GM12878 (cell line): ENCODE measurements at regions of chr2 and their contacts with region 1.

Region 1: GRCh38 chr2:230602562-230603230 is 109.9 kb upstream of the CAB39 start:
- DNase-seq: no peak
- ATAC-seq: peak; percentile 70
- H3K4me3 ChIP-seq: peak overlapping the region; percentile 32; the same call in 1 of the 2 replicates
- H3K27ac ChIP-seq: peak overlapping the region; percentile 86
- H3K4me1 ChIP-seq: peaks cover 47% of the 10 kb centered on the region
- H3K27me3 ChIP-seq: no peaks in the 10 kb centered on the region
- CTCF ChIP-seq: no peak
- EP300 ChIP-seq: no peak
- POLR2A ChIP-seq: peak; percentile 74
- RAD21 ChIP-seq: peak; percentile 16; the same call in 1 of the 2 replicates

Region 2: GRCh38 chr2:230124757-230125431 is 477.8 kb before region 1 on chr2:
- CTCF ChIA-PET with region 1: no interaction called
- POLR2A ChIA-PET with region 1: no interaction called
- RAD21 ChIA-PET with region 1: no interaction called
- SMC1A ChIA-PET with region 1: no interaction called
- in situ Hi-C with region 1: no loop called
- intact Hi-C with region 1: no loop called
- DNase-seq: no peak
- ATAC-seq: peak; percentile 82
- H3K4me3 ChIP-seq: peak overlapping the region; percentile 3; the same call in 1 of the 2 replicates
- H3K27ac ChIP-seq: no peak overlapping the region
- H3K4me1 ChIP-seq: 0 out of 2 replicates have a peak, but pooled peaks cover 4% of the 10 kb centered on the region
- H3K27me3 ChIP-seq: no peaks in the 10 kb centered on the region
- CTCF ChIP-seq: no peak
- EP300 ChIP-seq: no peak
- POLR2A ChIP-seq: no peak
- RAD21 ChIP-seq: no peak

Region 3: DNA sequence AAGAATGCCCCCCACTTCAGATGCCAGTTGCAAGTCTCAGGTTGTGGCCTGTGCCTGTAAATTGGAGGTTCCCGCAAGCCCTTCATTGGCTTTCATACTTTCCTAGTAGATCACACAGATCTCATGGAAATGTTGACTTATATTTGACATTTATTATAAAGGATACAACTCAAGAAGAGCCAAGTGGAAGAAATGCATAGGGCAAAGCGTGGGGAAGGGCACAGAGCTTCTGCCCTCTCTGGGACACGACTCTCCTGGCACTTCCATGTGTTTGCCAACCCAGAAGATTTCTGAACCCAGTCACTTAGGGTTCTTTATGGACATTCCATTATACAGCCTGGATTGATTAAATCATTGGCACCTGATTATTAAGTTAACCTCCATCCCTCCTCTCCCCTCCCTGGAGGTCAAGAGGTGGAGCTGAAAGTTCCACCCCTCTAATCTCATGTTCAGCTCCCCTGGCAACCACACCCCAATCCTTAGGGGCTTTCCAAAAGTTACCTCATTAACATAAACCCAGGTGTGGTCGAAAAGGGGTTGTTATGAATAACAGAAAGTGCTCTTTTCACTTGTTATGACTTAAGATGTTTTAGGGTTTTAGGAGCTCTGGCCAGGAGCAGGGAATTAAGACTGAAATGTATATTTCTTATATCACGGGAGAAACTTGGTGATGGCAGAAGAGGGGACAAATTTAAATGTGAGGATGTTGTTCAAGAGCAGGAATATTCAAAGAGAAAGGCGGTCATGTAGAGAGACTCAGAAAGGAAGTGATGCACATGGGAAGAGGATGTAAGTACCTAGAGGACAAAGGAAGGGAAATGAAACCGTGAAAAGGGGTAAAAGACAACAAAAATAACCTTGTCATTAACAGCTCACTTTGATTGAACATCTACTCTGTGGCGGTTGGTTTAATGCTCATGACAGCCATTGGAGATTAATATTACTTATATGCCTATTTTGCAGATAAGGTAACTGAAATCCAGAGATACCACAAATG is 154.9 kb before region 1 on chr2:
- CTCF ChIA-PET with region 1: interaction called, 4 read pairs
- POLR2A ChIA-PET with region 1: interaction called, 4 read pairs
- RAD21 ChIA-PET with region 1: interaction called, 26 read pairs
- SMC1A ChIA-PET with region 1: interaction called, 34 read pairs
- in situ Hi-C with region 1: no loop called
- intact Hi-C with region 1: loop called (anchors 5 kb)
- DNase-seq: peak; percentile 84
- ATAC-seq: peak; percentile 87
- H3K4me3 ChIP-seq: 0 out of 2 replicates have a peak overlapping the region, but pooled peaks have one; percentile 13
- H3K27ac ChIP-seq: peak overlapping the region; percentile 89
- H3K4me1 ChIP-seq: peaks cover 53% of the 10 kb centered on the region
- H3K27me3 ChIP-seq: no peaks in the 10 kb centered on the region
- CTCF ChIP-seq: no peak
- EP300 ChIP-seq: peak; percentile 80 to 84; a peak in 3 of 4 replicates
- POLR2A ChIP-seq: no peak
- RAD21 ChIP-seq: no peak

Region 4: GRCh38 chr2:230541934-230542380 is 60.7 kb before region 1 on chr2:
- CTCF ChIA-PET with region 1: no interaction called
- POLR2A ChIA-PET with region 1: no interaction called
- RAD21 ChIA-PET with region 1: interaction called, 7 read pairs
- SMC1A ChIA-PET with region 1: interaction called, 10 read pairs
- in situ Hi-C with region 1: no loop called
- intact Hi-C with region 1: loop called (anchors 2 kb)
- DNase-seq: peak; percentile 54
- ATAC-seq: peak; percentile 76
- H3K4me3 ChIP-seq: peak overlapping the region; percentile 21; the same call in 1 of the 2 replicates
- H3K27ac ChIP-seq: peak overlapping the region; percentile 41; the same call in 1 of the 2 replicates
- H3K4me1 ChIP-seq: peaks cover 53% of the 10 kb centered on the region
- H3K27me3 ChIP-seq: no peaks in the 10 kb centered on the region
- CTCF ChIP-seq: no peak
- EP300 ChIP-seq: peak; percentile 25 to 47; a peak in 2 of 4 replicates
- POLR2A ChIP-seq: no peak
- RAD21 ChIP-seq: 0 out of 2 replicates have a peak, but pooled peaks have one; percentile 4

Region 5: GRCh38 chr2:230589497-230590015 is 13.1 kb before region 1 on chr2:
- CTCF ChIA-PET with region 1: interaction called, 21 read pairs
- POLR2A ChIA-PET with region 1: interaction called, 41 read pairs
- RAD21 ChIA-PET with region 1: interaction called, 62 read pairs
- SMC1A ChIA-PET with region 1: interaction called, 82 read pairs
- in situ Hi-C with region 1: no loop called
- intact Hi-C with region 1: loop called (anchors 1 kb)
- DNase-seq: peak; percentile 98
- ATAC-seq: peak; percentile 90
- H3K4me3 ChIP-seq: no peak overlapping the region
- H3K27ac ChIP-seq: peak overlapping the region; percentile 96
- H3K4me1 ChIP-seq: peaks cover 62% of the 10 kb centered on the region
- H3K27me3 ChIP-seq: no peaks in the 10 kb centered on the region
- CTCF ChIP-seq: 0 out of 6 replicates have a peak, but pooled peaks of 1 of the 3 experiments have one; percentile 3
- EP300 ChIP-seq: peak; percentile 91 to 98
- POLR2A ChIP-seq: peak; percentile 77
- RAD21 ChIP-seq: peak; percentile 38; the same call in 1 of the 2 replicates

Region 6: DNA sequence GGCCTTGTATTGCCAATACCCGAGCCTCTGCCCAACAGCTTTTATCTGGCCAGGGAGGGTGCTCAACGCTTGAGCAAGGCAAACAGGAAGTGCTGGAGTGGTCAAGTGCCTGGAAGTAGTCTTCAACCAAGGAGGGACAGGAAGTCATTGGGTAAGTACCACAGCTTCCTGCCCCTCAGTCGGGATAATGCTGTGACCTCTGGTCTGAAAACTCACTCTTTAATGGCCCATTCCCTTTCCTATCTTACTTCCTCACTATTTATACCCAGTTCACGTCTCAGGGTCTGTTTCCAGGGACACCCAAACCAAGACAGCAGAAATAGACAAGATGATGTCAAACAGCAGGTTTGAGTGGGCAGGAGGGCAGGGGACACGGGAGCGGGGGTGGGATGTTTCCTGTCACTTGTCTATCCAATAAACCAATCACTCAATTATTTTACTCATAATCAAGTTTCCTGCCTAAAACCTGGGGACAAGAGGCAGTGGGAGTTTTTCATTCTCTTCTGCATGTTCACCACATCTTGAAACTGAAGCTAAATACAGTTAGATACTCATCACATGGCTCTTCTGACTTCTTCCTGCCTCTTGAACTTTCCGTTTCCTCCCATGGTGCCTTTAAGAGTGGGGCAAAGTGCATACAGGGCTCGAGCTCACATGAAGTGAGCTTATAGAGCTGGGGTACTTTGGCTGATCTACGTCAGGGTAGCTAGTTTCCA is 41.0 kb after region 1 on chr2:
- CTCF ChIA-PET with region 1: no interaction called
- POLR2A ChIA-PET with region 1: interaction called, 6 read pairs
- RAD21 ChIA-PET with region 1: interaction called, 15 read pairs
- SMC1A ChIA-PET with region 1: interaction called, 8 read pairs
- in situ Hi-C with region 1: no loop called
- intact Hi-C with region 1: no loop called
- DNase-seq: no peak
- ATAC-seq: peak; percentile 88
- H3K4me3 ChIP-seq: no peak overlapping the region
- H3K27ac ChIP-seq: peak overlapping the region; percentile 60
- H3K4me1 ChIP-seq: peaks cover 18% of the 10 kb centered on the region
- H3K27me3 ChIP-seq: no peaks in the 10 kb centered on the region
- CTCF ChIP-seq: no peak
- EP300 ChIP-seq: peak in 1 of 2 experiments; percentile 26; a peak in 1 of 4 replicates
- POLR2A ChIP-seq: no peak
- RAD21 ChIP-seq: no peak

Region 7: GRCh38 chr2:230658877-230659652 is 56.4 kb after region 1 on chr2:
- CTCF ChIA-PET with region 1: interaction called, 7 read pairs
- POLR2A ChIA-PET with region 1: interaction called, 12 read pairs
- RAD21 ChIA-PET with region 1: interaction called, 17 read pairs
- SMC1A ChIA-PET with region 1: interaction called, 5 read pairs
- in situ Hi-C with region 1: no loop called
- intact Hi-C with region 1: no loop called
- DNase-seq: peak; percentile 91
- ATAC-seq: peak; percentile 61
- H3K4me3 ChIP-seq: peak overlapping the region; percentile 62
- H3K27ac ChIP-seq: peak overlapping the region; percentile 91
- H3K4me1 ChIP-seq: peaks cover 67% of the 10 kb centered on the region
- H3K27me3 ChIP-seq: no peaks in the 10 kb centered on the region
- CTCF ChIP-seq: no peak
- EP300 ChIP-seq: peak; percentile 62 to 76
- POLR2A ChIP-seq: no peak; the same call in 1 of the 2 replicates
- RAD21 ChIP-seq: peak; percentile 31; the same call in 1 of the 2 replicates

Region 8: DNA sequence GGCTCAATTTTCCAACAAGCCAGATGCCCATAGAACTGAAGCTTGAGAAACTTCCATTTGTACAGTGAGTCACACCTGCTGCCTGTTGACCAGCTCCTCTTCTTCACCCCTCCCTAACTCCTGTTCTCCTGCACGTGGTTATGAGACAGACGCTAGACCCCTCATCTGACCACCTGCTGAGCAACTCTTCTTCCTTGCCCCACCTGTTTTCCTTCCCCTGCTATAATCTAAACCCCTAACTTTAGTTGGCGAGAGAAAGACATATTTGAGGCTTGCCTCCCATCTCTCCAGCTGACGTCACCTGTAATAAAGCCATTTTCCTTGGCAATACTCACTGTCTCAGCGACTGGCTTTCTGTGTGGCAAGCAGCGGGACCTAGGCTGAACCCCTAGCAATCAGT is 239.8 kb after region 1 on chr2:
- CTCF ChIA-PET with region 1: no interaction called
- POLR2A ChIA-PET with region 1: no interaction called
- RAD21 ChIA-PET with region 1: no interaction called
- SMC1A ChIA-PET with region 1: no interaction called
- in situ Hi-C with region 1: no loop called
- intact Hi-C with region 1: no loop called
- DNase-seq: no peak
- ATAC-seq: no peak
- H3K4me3 ChIP-seq: no peak overlapping the region
- H3K27ac ChIP-seq: no peak overlapping the region
- H3K4me1 ChIP-seq: peaks cover under 1% of the 10 kb centered on the region; the same call in 1 of the 2 replicates
- H3K27me3 ChIP-seq: peaks cover 0 to 3% of the 10 kb centered on the region in 2 experiments; a peak in 1 of 4 replicates
- CTCF ChIP-seq: no peak
- EP300 ChIP-seq: no peak
- POLR2A ChIP-seq: no peak
- RAD21 ChIP-seq: no peak